HAP-1 (cell line): ENCODE measurements at regions of chr3 and their contacts with region 1.

Region 1: DNA sequence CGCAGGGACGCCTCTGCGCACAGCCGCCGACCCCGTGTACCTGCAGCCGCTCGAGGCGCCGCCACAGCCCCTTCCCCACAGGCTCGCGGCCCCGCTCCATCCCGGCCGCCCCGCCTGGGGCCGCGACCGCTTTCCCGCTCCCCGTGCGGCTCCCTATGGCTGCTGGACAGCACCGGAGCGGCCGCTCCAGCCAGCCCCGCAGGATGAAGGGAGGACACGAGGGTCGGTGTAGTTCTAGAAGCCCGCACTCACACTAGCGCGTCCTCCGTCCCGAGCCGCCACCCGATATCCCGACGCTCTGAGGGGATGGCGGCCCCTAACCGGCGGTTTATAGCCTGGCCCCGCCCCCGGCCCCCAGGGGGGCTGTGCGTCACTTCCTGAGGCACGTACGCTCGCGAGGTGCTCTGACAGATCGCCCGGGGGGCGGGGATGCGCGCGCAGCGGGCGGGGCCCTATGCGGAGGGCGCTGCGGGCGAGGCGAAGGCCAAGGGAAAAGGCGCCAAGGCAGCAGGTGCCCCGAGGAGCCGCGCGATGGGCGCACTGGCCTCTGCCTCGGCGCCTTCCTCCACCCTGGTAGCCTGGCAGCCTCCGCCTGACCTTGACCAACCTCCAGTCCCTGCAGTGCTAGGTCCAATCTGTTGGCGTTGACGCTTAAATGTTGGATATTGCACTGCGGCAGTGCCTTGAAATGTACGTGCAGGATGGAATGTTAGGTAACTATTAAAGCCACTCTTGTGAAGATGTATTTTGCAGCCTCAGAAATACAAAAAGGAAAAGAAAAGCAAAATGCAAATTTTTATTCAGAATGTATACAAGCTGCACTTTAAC is at the start of gene TFRC:
- DNase-seq: peak; percentile 87 to 98
- H3K4me3 ChIP-seq: peak within 1 kb of the TSS; percentile 80
- H3K4me1 ChIP-seq: peaks cover 32% of the 10 kb centered on the region
- H3K27me3 ChIP-seq: no peaks in the 10 kb centered on the region

Region 2: DNA sequence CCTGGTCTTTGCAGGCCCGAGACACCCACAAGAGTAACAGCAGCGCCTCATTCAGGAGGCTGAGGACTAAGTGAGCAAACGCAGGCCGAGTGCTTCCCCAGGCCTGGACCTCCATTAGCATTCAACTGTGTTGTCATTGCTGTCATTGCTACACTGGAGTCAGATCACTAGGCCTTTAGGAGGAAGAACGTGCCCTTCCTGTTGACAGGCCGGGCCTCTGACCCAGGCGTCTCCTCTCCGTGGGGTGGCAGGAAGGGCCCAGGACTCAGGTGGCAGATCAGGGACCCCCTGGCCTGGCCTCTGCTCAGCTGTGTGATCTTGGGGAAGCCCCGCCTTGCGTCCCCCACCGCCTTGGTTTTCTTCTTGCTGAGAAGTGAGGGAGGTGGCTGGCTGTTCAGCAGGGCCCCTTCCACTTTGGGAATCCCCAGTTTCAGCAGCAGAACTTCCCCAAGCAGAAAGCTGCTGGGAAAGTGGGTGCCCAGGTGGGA is 110.1 kb after region 1 on chr3:
- in situ Hi-C with region 1: loop called (anchors 5 kb)
- DNase-seq: peak in 1 of 2 experiments; percentile 37
- H3K4me3 ChIP-seq: no peak overlapping the region
- H3K4me1 ChIP-seq: no peaks in the 10 kb centered on the region
- H3K27me3 ChIP-seq: no peaks in the 10 kb centered on the region

Region 3: DNA sequence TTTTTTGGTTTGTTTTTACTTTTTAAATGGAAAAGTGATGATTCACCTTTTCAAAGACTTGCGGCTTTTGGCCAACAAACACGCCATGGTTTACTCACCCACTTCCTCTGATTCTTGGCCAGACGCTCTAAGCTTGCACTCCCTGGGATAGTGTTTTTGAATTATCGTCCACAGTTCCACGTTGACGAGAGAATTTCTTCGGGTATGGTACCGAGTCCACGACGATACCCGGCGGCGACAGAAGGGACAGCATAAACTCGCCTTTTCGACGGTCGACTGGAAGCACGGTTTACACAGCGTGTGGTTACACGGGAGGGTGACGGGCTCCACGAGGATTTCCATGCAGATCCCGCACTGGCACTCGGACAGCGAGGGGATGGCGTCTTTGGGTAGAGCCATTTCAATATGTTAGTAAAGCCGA is 420.8 kb after region 1 on chr3:
- in situ Hi-C with region 1: loop called (anchors 25 kb)
- DNase-seq: peak in 1 of 2 experiments; percentile 55
- H3K4me3 ChIP-seq: peak overlapping the region; percentile 95
- H3K4me1 ChIP-seq: peaks cover 9% of the 10 kb centered on the region
- H3K27me3 ChIP-seq: no peaks in the 10 kb centered on the region